Activated T-helper 1 cell treated with anti-CD3 and anti-CD28 coated beads, Interleukin-12 subunit alpha, Interleukin-12 subunit beta, Interleukin-2, Interleukin-4 antibody, amounts not matched to agents 30 ng/mL and 10 ng/mL and 1 ng/mL, durations not matched to agents 14 hours and 24 hours and 36 hours (primary cell): ENCODE measurements at regions of chr6 and their contacts with region 1.

Region 1: DNA sequence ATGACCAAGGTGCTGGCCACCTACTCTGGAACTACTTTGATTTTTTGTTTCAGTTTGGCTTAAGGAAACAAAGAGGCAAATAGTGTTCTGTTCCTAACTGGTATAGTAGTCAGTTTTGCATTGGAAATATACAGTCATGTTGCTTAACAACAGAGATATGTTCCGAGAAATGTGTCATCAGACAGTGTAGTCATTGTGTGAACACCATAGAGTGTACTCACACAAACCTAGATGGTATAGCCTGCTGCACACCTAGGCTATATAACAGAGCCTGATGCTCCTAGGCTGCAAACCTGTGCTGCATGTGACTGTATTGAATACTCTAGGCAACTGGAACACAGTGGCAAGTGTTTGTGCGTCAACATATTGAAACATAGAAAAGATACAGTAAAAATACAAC is 80.4 kb downstream of the ARID1B start:
- DNase-seq: peak; percentile 11
- H3K4me3 Mint-ChIP-seq: no peak overlapping the region
- H3K27ac Mint-ChIP-seq: peak overlapping the region; percentile 90
- H3K4me1 Mint-ChIP-seq: peaks cover 56% of the 10 kb centered on the region
- H3K27me3 Mint-ChIP-seq: no peaks in the 10 kb centered on the region

Region 2: GRCh38 chr6:156760377-156760776 is 97.2 kb before region 1 on chr6:
- intact Hi-C with region 1: no loop called
- DNase-seq: no peak
- H3K4me3 Mint-ChIP-seq: no peak overlapping the region
- H3K27ac Mint-ChIP-seq: no peak overlapping the region
- H3K4me1 Mint-ChIP-seq: no peaks in the 10 kb centered on the region
- H3K27me3 Mint-ChIP-seq: peaks cover 9% of the 10 kb centered on the region

Region 3: DNA sequence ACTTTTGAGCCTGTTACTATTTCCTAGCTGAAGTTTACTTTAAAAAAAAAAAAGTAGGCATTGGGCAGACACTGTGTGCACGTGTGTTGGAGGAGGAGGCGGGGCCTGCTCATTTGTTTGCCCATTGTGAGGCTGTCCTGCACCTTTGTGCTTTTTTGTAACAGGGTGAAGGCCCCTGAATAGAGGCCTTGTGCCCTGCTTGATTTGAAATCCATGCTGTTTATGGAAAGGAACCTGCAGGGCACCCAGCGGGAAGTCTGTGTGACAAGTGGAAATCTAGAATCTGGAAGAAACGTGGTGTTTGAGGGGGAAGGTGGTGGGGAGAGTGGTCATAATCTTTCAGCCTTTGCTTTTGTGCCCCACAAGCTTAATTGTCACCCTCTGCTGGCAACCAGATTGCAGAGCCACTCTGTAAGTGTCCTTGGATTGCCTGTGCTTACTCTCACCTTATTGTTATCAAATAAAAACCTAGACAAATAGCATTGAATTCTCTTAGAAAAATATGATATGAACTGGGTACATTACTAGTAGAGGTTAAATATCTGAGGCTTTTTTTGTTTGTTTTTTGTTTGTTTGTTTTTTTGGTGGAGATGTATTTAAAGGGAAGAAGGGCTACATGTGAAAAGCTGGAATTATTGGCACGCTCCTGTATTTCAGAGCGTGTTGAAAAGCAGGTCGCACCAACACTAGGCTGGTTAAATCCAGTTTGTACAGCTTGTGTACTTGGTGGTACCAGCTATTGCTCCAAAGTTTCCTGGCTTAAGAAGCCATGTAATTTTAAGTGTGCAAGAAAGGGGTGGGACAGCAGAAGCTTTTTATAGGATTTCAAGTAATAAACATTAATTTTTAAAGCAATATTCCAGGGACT is 75.9 kb after region 1 on chr6:
- intact Hi-C with region 1: loop called (anchors 1 kb)
- DNase-seq: no peak
- H3K4me3 Mint-ChIP-seq: no peak overlapping the region
- H3K27ac Mint-ChIP-seq: no peak overlapping the region
- H3K4me1 Mint-ChIP-seq: peaks cover 45% of the 10 kb centered on the region
- H3K27me3 Mint-ChIP-seq: no peaks in the 10 kb centered on the region

Region 4: DNA sequence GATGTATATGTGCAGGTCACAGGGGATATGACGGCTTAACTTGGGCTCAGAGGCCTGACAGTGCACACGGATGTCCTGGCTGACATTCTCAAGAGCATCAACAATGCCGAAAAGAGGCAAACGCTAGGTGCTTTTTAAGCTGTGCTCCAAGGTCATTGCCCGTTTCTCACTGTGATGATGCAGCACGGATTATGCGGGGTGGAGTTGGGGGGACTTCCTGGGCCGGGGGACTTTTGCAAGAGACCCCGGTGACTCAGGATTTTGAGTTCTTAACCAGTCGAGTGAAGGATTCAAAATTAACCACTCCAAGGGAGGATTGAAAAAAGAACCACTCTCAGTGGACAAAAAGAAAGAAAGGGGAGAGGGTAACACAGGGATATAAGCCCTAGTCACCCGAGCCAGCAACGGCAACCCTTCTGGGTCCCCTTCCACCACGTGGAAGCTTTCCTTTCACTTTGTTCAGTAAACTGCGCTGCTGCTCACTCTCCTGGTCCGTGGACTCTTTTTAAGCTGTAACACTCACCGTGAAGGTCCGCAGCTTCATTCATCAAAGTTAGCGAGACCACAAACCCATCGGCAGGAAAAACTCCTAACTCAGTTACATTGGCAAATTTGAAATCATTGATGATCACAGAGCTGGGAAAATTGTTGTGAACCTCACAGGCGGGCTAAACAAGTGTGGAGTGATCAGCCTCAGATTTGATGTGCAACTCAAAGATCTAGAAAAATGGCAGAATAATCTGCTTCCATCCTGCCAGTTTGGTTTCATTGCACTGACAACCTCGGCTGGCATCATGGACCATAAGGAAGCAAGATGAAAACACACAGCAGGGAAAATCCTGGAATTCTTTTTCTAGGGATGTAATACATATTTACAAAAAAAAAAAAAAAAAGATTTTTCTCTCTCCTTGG is 118.9 kb after region 1 on chr6:
- intact Hi-C with region 1: loop called (anchors 5 kb)
- DNase-seq: no peak
- H3K4me3 Mint-ChIP-seq: peak overlapping the region; percentile 76
- H3K27ac Mint-ChIP-seq: peak overlapping the region; percentile 64
- H3K4me1 Mint-ChIP-seq: peaks cover 57% of the 10 kb centered on the region
- H3K27me3 Mint-ChIP-seq: peaks cover 2% of the 10 kb centered on the region

Region 5: GRCh38 chr6:157099912-157100593 is 242.5 kb after region 1 on chr6:
- intact Hi-C with region 1: loop called (anchors 1 kb)
- DNase-seq: peak; percentile 58
- H3K4me3 Mint-ChIP-seq: peak overlapping the region; percentile 63
- H3K27ac Mint-ChIP-seq: peak overlapping the region; percentile 86
- H3K4me1 Mint-ChIP-seq: peaks cover 57% of the 10 kb centered on the region
- H3K27me3 Mint-ChIP-seq: no peaks in the 10 kb centered on the region

Region 6: DNA sequence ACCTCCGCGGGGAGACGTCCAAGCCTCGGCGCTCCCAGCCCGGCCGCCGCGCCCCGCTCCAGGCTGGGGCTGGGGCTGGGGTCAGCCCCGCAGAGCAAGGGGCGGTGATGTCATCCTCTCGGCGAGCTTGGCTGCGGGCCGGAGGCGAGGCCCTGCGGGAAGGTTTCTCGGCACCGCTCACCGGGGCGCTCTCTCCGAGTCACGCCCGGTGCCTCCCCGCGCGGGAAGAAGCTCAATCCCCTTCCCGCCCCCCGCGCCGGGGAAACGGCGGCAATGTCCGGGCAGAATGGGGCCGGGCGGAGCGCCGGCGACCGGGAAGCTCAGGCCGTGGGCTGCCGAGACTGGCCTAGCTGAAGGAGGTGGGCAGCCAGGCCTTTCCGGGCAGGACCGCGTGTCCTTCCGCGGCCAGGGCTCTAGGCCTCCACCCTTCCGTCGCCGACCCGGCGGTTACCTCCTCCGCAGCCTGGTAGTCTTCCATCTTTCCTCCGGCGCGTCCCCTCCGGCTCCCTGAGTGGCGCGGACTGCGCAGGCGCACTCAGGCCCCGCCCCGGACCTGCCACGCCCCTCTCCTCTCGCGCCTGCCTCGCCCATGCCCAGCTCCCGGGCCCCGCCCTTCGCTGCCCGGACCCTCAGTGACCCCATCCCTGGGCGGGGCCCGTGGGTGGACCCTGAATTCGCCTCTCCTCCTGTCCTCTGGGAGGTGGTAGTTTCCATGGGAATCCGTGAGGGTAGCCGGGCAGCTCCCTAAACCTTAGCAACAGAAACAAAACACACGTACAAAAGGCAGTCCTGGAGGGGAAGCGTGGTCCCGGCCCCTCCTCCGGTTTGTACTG is 1786.9 kb after region 1 on chr6 and contains the start of gene DYNLT1:
- intact Hi-C with region 1: loop called (anchors 5 kb)
- DNase-seq: peak; percentile 91
- H3K4me3 Mint-ChIP-seq: peak within 1 kb of the TSS; percentile 99
- H3K27ac Mint-ChIP-seq: peak within 1 kb of the TSS; percentile 97
- H3K4me1 Mint-ChIP-seq: peaks cover 81% of the 10 kb centered on the region
- H3K27me3 Mint-ChIP-seq: no peaks in the 10 kb centered on the region
- total RNA-seq, gene DYNLT1: 103 and 105 TPM in 2 replicates